A673 (cell line): ENCODE measurements at regions of chr16 and their contacts with region 1.

Region 1: GRCh38 chr16:57235128-57236021 is 9.7 kb upstream of the ARL2BP start:
- DNase-seq: peak; percentile 80
- H3K4me3 ChIP-seq: no peak overlapping the region
- H3K27ac ChIP-seq: peak overlapping the region; percentile 11
- H3K4me1 ChIP-seq: peaks cover 7% of the 10 kb centered on the region
- H3K27me3 ChIP-seq: no peaks in the 10 kb centered on the region
- CTCF ChIP-seq: no peak

Region 2: GRCh38 chr16:56450986-56451752 is 784.2 kb before region 1 on chr16 and contains the starts of genes NUDT21 and OGFOD1:
- CTCF ChIA-PET with region 1: no interaction called
- POLR2A ChIA-PET with region 1: interaction called, 12 read pairs
- intact Hi-C with region 1: no loop called
- DNase-seq: peak; percentile 99
- H3K4me3 ChIP-seq: peak within 1 kb of the TSS; percentile 81
- H3K27ac ChIP-seq: peak within 1 kb of the TSS; percentile 90
- H3K4me1 ChIP-seq: peaks cover 38% of the 10 kb centered on the region
- H3K27me3 ChIP-seq: no peaks in the 10 kb centered on the region
- CTCF ChIP-seq: no peak
- total RNA-seq, gene NUDT21: 220 and 231 TPM in 2 replicates
- total RNA-seq, gene OGFOD1: 68.4 and 78.1 TPM in 2 replicates